CD8-positive, alpha-beta memory T cell (primary cell): ENCODE measurements at regions of chr22 and their contacts with region 1.

Region 1: GRCh38 chr22:36977947-36978660 is 41.1 kb downstream of the TST start:
- DNase-seq: peak; percentile 84 to 92 (median 87)
- H3K4me3 ChIP-seq: peak overlapping the region; percentile 76
- H3K4me3 Mint-ChIP-seq: peak overlapping the region; percentile 91 to 99 (median 97)
- H3K27ac ChIP-seq: peak overlapping the region; percentile 68
- H3K27ac Mint-ChIP-seq: peak overlapping the region; percentile 90 to 99 (median 94)
- H3K4me1 ChIP-seq: peaks cover 11% of the 10 kb centered on the region
- H3K4me1 Mint-ChIP-seq: peaks cover 8 to 13% (median 11%) of the 10 kb centered on the region in 3 donors
- H3K27me3 ChIP-seq: no peaks in the 10 kb centered on the region
- H3K27me3 Mint-ChIP-seq: peaks cover 5 to 14% of the 10 kb centered on the region in 2 donors

Region 2: DNA sequence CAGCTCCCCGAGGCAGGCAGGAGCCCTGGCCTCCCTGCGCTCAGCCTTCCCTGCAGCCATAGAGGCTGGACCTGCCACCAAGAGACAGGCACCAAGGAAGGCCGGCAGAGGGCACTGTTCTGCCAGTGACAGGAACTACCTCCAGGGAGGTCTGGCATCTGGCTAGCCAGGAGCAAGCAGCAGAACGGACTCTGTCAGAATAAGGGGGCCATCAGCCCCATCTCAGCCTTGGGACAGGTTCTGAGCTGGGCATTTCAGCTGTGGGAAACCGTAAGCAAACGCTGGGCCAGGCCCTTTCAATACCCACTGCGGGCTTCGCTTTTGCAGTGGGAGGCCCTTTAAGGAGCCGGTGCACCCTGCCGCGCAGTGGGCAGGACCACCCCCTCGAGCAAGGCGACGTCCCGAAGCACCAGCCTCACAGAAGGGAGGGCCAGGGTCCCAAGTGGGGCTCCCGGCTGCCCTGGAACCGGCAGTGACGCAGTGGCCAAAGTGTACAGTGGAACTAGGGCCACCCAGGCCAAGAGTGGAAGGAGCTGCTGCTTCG is 220.4 kb before region 1 on chr22:
- CTCF ChIA-PET with region 1: interaction called, 14 read pairs
- POLR2A ChIA-PET with region 1: no interaction called
- DNase-seq: peak; percentile 43 to 81 (median 52)
- H3K4me3 ChIP-seq: no peak overlapping the region
- H3K4me3 Mint-ChIP-seq: no peak overlapping the region
- H3K27ac ChIP-seq: no peak overlapping the region
- H3K27ac Mint-ChIP-seq: peak overlapping the region in 1 of 8 donors; percentile 59
- H3K4me1 ChIP-seq: no peaks in the 10 kb centered on the region
- H3K4me1 Mint-ChIP-seq: peaks cover 0 to 4% (median 3%) of the 10 kb centered on the region in 3 donors
- H3K27me3 ChIP-seq: no peaks in the 10 kb centered on the region
- H3K27me3 Mint-ChIP-seq: peaks cover 8 to 19% of the 10 kb centered on the region in 2 donors

Region 3: DNA sequence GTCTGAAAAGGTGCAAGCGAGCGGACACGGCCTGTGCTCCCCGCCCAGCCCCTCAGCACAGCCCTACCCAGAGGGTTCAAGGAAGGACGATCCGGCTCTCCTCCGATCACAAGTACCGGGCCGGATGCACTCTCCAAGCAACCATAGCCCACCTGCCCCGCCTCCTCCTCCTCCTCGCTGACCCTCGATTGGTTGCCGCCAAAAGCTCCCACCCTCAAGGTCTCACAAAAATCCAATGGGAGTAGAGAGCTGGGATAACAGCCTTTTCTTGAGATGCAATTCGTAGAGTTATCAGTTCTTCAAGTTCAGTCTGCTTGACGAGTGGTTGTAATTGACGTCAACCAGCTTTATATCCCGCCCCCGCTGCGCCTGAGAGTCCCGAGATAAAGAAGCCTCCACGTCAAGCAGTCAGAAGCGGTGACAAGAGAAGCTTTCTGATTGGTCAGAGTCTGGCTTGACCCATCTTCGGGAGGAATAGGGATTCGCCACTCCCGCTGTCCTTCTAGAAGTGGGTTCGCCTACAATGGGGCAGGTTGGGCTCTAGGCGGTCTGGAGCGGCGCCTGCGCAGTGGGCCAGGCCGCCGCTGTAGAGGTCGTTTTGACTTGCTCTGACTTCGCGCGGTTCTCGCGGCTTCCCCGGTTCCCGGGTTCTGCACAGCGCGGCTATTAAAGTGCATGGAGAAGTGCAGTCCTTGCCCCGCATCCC is 202.0 kb before region 1 on chr22 and contains the start of gene IFT27:
- CTCF ChIA-PET with region 1: interaction called, 17 read pairs
- POLR2A ChIA-PET with region 1: interaction called, 9 read pairs
- DNase-seq: peak; percentile 92 to 99 (median 98)
- H3K4me3 ChIP-seq: peak within 1 kb of the TSS; percentile 57
- H3K4me3 Mint-ChIP-seq: peak within 1 kb of the TSS; percentile 81 to 97 (median 91)
- H3K27ac ChIP-seq: peak within 1 kb of the TSS; percentile 74
- H3K27ac Mint-ChIP-seq: peak within 1 kb of the TSS; percentile 91 to 99 (median 96)
- H3K4me1 ChIP-seq: peaks cover 16% of the 10 kb centered on the region
- H3K4me1 Mint-ChIP-seq: peaks cover 18 to 34% (median 21%) of the 10 kb centered on the region in 3 donors
- H3K27me3 ChIP-seq: no peaks in the 10 kb centered on the region
- H3K27me3 Mint-ChIP-seq: no peaks in the 10 kb centered on the region
- total RNA-seq, gene IFT27: 24.9 to 26.5 TPM

Region 4: DNA sequence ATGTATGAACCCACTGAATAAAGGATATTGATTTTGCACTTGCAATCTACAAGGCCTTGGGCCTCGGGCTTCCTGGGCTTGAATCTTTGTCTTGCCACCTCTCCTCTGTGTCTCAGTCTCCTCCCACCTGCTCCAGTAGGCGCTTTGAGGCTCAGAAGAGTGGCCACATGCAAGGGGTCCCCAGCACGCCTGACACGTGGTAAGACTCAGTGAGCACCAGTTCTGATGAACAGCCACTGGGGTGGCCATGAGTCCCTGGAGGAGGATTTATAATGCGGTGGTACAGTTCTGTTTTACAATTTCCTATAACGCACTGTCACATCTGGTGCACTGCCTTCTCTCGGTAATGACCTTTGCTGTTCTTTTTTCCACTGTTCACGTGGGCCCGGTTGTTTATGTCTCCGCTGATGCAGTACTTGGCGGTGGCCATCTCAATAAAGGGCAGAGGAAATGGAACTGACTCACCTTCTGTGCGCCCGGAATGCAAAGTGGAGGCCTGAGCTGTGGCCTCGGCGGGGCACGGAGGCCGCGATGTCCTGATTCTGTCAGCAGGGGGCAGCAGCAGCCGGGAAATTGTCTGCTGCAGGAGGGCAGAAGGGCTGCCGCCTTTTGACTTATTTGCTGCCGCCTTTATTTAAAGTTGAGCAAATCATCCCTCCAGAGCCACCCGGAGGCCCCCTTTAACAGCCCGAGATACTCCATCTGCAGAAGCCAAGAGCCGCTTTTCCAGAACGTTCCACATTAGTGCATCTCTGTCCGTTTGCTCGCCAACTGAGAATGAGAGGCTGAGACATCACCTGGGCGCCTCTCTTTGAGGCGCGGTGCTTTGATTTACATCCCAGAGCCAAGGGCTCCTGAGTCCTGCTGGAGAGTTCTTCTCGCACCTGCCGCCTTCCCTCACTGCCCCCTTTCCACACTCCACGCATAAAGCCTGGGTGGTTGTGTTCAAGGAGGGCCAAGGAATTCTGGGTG is 196.2 kb before region 1 on chr22:
- CTCF ChIA-PET with region 1: interaction called, 17 read pairs
- POLR2A ChIA-PET with region 1: no interaction called
- DNase-seq: peak; percentile 72 to 88 (median 75)
- H3K4me3 ChIP-seq: no peak overlapping the region
- H3K4me3 Mint-ChIP-seq: peak overlapping the region in 4 of 7 donors; percentile 8 to 61 (median 43)
- H3K27ac ChIP-seq: no peak overlapping the region
- H3K27ac Mint-ChIP-seq: peak overlapping the region in 6 of 8 donors; percentile 41 to 91 (median 67)
- H3K4me1 ChIP-seq: peaks cover 14% of the 10 kb centered on the region
- H3K4me1 Mint-ChIP-seq: peaks cover 14 to 22% (median 17%) of the 10 kb centered on the region in 3 donors
- H3K27me3 ChIP-seq: no peaks in the 10 kb centered on the region
- H3K27me3 Mint-ChIP-seq: peaks cover 8 to 13% of the 10 kb centered on the region in 2 donors

Region 5: GRCh38 chr22:36966851-36967540 is 11.1 kb before region 1 on chr22:
- CTCF ChIA-PET with region 1: interaction called, 22 read pairs
- POLR2A ChIA-PET with region 1: interaction called, 5 read pairs
- DNase-seq: no peak
- H3K4me3 ChIP-seq: no peak overlapping the region
- H3K4me3 Mint-ChIP-seq: no peak overlapping the region
- H3K27ac ChIP-seq: no peak overlapping the region
- H3K27ac Mint-ChIP-seq: peak overlapping the region in 1 of 8 donors; percentile 3
- H3K4me1 ChIP-seq: no peaks in the 10 kb centered on the region
- H3K4me1 Mint-ChIP-seq: no peaks in the 10 kb centered on the region
- H3K27me3 ChIP-seq: no peaks in the 10 kb centered on the region
- H3K27me3 Mint-ChIP-seq: peaks cover 7 to 11% of the 10 kb centered on the region in 2 donors